ENCODE measurements at regions of chr1 and their contacts with region 1.

Region 1: DNA sequence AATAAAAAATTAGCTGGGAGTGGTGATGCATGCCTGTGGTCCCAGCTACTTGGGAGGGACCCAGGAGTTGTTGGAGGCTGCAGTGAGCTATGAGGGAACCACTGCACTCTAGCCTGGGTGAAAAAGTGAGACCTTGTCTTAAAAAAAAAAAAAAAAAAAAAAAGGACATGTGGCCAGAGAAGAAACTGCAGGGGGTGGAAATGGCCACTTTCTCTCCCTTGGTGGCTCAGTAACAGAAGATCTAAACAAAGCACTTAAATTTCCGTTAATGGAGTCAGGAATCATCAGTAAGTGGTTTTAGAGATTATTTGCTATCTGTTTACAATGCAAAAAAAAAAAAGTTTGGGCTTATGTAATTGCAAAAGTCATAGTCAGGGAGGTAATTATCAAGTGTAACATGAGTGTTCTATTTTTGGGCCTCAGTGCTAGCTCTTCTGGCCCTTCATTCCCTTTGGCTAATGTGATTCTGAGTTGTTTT is 19.3 kb upstream of the OPRD1 start:
- DNase-seq: no peak
- ATAC-seq: no peak
- H3K4me3 ChIP-seq: no peak overlapping the region
- H3K4me3 Mint-ChIP-seq: no peak overlapping the region
- H3K27ac ChIP-seq: no peak overlapping the region
- H3K27ac Mint-ChIP-seq: no peak overlapping the region
- H3K4me1 ChIP-seq: no peaks in the 10 kb centered on the region
- H3K4me1 Mint-ChIP-seq: peaks cover 0 to 5% (median 0%) of the 10 kb centered on the region in 7 donors
- H3K27me3 ChIP-seq: no peaks in the 10 kb centered on the region
- H3K27me3 Mint-ChIP-seq: peaks cover 0 to 39% (median 0%) of the 10 kb centered on the region in 5 donors

Region 2: DNA sequence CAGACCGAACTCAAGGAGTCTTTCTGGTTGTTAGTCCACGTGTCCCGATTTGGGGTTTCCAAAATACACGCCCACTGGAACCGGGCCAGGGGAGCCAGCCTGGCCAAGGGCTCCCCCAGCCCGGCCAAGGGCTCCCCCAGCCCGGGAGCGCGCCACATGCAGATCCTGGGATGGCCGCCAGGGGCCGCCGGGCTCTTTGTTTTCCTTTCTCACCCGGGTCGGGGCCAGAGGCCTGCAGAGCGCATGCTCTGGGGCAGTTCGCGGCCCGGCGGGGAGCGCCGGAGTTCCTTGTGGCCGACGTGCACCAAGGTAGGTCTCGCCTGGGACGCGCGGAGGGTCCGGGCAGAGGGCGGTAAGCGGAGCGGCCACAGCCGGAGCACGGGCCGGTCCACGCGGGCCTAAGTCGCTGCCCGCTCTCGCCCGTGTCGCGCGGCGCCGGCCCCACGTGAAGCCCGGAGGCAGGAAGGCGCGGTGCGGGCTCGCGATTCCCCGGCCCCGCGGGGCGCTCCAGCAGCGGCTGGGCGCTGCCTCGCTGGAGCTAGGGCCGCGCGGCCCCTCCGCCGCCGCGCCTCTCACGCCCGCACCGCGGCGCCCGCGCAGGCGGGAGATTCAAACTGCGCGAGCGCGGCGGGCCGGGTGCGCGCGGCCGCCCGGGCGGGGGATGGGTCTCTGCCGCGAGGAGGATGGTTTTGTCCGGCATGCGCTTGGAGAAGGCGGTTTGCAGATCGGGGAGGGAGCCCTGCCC is 274.5 kb before region 1 on chr1:
- CTCF ChIA-PET with region 1: no interaction called
- POLR2A ChIA-PET with region 1: no interaction called
- intact Hi-C with region 1: loop called in 1 of 2 experiments (anchors 5 kb)
- DNase-seq: peak; percentile 77 to 94 (median 84)
- ATAC-seq: peak; percentile 95
- H3K4me3 ChIP-seq: peak overlapping the region; percentile 81
- H3K4me3 Mint-ChIP-seq: peak overlapping the region; percentile 76 to 91 (median 88)
- H3K27ac ChIP-seq: peak overlapping the region; percentile 76
- H3K27ac Mint-ChIP-seq: peak overlapping the region; percentile 59 to 91 (median 83)
- H3K4me1 ChIP-seq: peaks cover 9 to 10% of the 10 kb centered on the region in 2 donors
- H3K4me1 Mint-ChIP-seq: peaks cover 16 to 46% (median 23%) of the 10 kb centered on the region in 7 donors
- H3K27me3 ChIP-seq: no peaks in the 10 kb centered on the region
- H3K27me3 Mint-ChIP-seq: no peaks in the 10 kb centered on the region

Measured in naive thymus-derived CD4-positive, alpha-beta T cell (primary cell).